Motor neuron (in vitro differentiated cells): ENCODE measurements at regions of chr1 and their contacts with region 1.

Region 1: DNA sequence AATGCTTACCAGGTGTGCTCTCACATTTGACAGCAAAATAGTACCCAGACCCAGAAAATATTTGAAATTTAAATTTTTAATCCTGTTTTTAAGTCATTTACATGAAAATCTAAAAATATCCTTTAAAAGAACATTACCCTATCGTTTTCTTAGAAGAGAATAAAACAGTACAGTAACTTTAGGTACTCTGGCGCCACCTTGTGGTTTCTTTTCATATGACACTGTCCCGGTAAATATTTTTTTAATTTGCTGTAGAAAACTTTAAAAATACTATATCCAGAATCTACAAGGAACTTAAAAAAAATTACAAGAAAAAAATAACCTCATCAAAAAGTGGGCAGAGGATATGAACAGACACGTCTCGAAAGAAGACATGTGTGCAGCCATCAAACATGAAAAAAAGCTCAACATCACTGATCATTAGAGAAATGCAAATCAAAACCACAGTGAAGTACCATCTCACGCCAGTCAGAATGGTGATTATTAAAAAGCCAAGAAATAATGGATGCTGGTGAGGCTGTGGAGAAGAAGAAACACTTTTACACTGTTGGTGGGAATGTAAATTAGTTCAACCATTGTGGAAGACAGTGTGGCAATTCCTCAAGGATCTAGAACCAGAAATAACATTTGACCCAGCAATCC is 129.2 kb downstream of the RGS21 start:
- ATAC-seq: peak in 5 of 8 experiments; percentile 22 to 50 (median 40)
- H3K4me3 ChIP-seq: no peak overlapping the region
- H3K27ac ChIP-seq: no peak overlapping the region
- H3K4me1 ChIP-seq: peaks cover 0 to 9% of the 10 kb centered on the region in 2 donors

Region 2: DNA sequence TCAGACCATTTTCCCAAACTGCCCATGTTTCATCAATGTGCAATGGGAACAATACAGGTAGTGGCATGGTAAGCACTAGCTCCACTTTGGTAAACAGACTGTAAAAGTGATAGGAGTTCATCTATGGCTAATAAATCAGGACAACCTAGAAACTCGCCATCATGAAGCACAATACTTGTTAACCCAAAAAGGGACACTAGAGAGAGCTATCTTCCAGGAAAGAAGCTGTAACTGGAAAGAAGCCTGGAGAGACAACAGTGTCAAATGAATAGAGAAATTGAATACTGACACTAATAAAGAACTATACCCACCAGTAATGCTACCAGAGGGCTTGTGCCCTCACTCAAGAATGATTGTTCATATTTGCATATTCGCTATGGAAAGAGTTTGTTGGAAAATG is 452.4 kb before region 1 on chr1:
- in situ Hi-C with region 1: loop called in 1 of 9 experiments (anchors 25 kb)
- ATAC-seq: peak in 3 of 8 experiments; percentile 62 to 81 (median 65)
- H3K4me3 ChIP-seq: no peak overlapping the region
- H3K27ac ChIP-seq: no peak overlapping the region
- H3K4me1 ChIP-seq: no peaks in the 10 kb centered on the region

Region 3: GRCh38 chr1:192010406-192010805 is 435.6 kb before region 1 on chr1:
- in situ Hi-C with region 1: loop called in 1 of 9 experiments (anchors 25 kb)
- ATAC-seq: no peak
- H3K4me3 ChIP-seq: no peak overlapping the region
- H3K27ac ChIP-seq: no peak overlapping the region
- H3K4me1 ChIP-seq: no peaks in the 10 kb centered on the region